ENCODE measurements at regions of chr1 and their contacts with region 1.

Region 1: GRCh38 chr1:15598436-15598835 is 13.6 kb upstream of the AGMAT start:
- DNase-seq: no peak
- H3K4me3 ChIP-seq: no peak overlapping the region
- H3K27ac ChIP-seq: no peak overlapping the region
- H3K4me1 ChIP-seq: peaks cover 22% of the 10 kb centered on the region
- H3K27me3 ChIP-seq: no peaks in the 10 kb centered on the region
- CTCF ChIP-seq: no peak
- POLR2A ChIP-seq: no peak

Region 2: DNA sequence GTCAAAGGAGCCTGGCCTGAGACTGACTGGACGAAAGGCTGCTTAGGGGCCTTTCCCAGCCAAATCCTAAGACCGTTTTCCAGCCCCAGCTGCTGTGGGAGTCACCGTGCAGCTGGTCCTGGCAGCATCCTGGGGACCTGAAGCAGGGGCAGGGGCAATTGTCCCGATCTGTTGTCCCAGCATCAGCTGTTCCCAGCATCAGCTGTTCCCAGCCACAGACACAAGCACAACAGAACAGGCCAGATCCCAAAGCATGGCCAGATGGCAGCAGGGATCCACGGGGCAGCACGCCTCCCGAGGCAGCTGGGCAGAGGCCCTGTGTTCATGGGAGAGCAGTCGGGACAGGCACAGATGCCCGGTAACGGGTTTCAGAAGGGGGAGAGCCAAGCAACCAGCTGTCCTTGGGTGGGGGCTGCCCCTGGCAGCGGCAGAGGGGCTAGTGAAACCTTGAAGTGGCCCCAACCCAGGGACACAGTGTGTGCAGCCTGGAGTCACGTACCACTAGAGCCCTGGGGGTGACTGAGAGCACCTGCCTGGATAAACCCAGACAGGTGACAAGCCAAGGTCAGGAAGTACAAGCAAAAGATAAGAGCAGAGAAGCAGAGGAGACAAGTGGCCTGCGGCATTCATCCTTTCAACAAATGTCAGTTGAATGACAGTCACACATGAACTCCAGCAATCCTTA is 109.2 kb before region 1 on chr1:
- intact Hi-C with region 1: no loop called
- DNase-seq: no peak
- H3K4me3 ChIP-seq: no peak overlapping the region
- H3K27ac ChIP-seq: no peak overlapping the region
- H3K4me1 ChIP-seq: no peaks in the 10 kb centered on the region
- H3K27me3 ChIP-seq: no peaks in the 10 kb centered on the region
- CTCF ChIP-seq: no peak
- POLR2A ChIP-seq: no peak

Region 3: DNA sequence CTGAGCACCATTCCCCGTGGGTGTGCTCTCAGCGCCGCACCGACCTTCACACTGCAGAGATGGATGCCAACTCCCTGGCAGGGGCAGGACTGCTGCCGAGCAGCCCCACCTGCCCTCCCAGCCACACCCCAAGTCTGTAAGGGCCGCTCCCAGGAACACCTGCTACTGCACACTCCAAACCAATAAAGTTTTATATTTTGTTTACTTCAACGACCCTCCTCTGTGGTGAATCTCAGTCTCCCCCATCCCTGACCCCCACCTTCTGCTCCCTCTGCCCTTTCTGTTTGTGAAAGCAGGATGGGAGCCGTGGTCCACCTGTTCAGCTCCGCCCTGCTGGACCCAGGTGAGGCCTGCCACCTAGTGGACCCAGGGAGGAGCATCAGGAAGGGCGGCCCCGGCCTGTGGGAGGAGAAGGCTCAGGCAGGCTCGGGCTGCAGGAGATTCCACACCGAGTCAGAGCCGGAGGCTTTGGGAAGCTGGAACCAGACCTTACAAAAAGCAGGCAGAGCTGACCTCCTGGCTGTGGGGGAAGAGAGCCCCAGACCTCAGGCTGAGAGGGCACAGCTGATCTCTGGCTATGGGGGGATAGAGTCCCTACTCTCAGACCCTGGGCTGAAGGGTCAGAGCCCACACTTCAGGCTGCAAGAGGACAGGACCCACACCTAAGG is 142.9 kb after region 1 on chr1:
- intact Hi-C with region 1: loop called (anchors 10 kb)
- DNase-seq: no peak
- H3K4me3 ChIP-seq: no peak overlapping the region
- H3K27ac ChIP-seq: no peak overlapping the region
- H3K4me1 ChIP-seq: peaks cover 23% of the 10 kb centered on the region
- H3K27me3 ChIP-seq: no peaks in the 10 kb centered on the region
- CTCF ChIP-seq: peak; percentile 44 to 90 (median 78)
- POLR2A ChIP-seq: no peak